Astrocyte of the cerebellum (primary cell): ENCODE measurements at regions of chr9 and their contacts with region 1.

Region 1: GRCh38 chr9:2837915-2838314 is 6.0 kb downstream of the PUM3 start:
- DNase-seq: no peak
- H3K4me3 ChIP-seq: no peak overlapping the region
- CTCF ChIP-seq: no peak

Region 2: DNA sequence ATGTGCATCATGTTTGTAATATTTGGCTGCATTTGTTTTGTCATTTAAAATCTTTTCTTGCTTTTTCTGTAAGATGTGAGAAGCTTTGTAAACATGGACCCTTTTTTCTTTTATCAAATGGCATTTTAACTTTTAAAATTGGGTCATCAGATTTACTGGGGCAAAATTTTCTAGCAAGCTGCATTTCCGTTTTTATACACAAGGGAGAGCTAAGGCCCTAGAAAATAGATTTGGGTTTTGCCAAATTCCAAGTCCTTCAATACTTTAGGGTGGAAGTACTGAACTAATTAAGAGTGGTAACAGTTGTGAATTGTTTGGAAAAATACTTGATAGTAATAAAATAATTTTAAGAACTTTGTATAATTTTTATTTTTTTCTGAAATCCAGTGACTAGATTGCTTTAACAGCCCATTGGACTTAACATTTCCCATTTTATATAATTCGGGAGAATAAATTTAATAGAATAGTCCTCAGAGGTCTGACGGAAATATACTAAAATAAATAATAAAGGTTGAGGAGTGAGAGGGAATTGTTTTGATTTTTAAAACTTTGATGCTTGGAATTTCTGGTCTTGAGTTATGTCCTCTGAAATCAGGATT is 705.3 kb before region 1 on chr9:
- in situ Hi-C with region 1: loop called (anchors 25 kb)
- DNase-seq: no peak
- H3K4me3 ChIP-seq: no peak overlapping the region
- CTCF ChIP-seq: peak; percentile 71